ENCODE measurements at regions of chr17 and their contacts with region 1.

Region 1: GRCh38 chr17:42517516-42517915 is 18.5 kb upstream of the NAGLU start:
- DNase-seq: peak; percentile 92
- ATAC-seq: peak; percentile 64

Region 2: GRCh38 chr17:42322382-42323267 is 194.9 kb before region 1 on chr17:
- intact Hi-C with region 1: loop called (anchors 5 kb)
- DNase-seq: peak; percentile 93
- ATAC-seq: peak; percentile 84

Region 3: GRCh38 chr17:42405963-42406495 is 111.5 kb before region 1 on chr17:
- intact Hi-C with region 1: loop called (anchors 5 kb)
- DNase-seq: peak; percentile 94
- ATAC-seq: peak; percentile 77

Region 4: GRCh38 chr17:42422958-42423712 is 94.4 kb before region 1 on chr17 and contains the start of gene CAVIN1:
- intact Hi-C with region 1: loop called (anchors 5 kb)
- DNase-seq: peak; percentile 99
- ATAC-seq: peak; percentile 92
- total RNA-seq, gene CAVIN1: 240 TPM

Region 5: DNA sequence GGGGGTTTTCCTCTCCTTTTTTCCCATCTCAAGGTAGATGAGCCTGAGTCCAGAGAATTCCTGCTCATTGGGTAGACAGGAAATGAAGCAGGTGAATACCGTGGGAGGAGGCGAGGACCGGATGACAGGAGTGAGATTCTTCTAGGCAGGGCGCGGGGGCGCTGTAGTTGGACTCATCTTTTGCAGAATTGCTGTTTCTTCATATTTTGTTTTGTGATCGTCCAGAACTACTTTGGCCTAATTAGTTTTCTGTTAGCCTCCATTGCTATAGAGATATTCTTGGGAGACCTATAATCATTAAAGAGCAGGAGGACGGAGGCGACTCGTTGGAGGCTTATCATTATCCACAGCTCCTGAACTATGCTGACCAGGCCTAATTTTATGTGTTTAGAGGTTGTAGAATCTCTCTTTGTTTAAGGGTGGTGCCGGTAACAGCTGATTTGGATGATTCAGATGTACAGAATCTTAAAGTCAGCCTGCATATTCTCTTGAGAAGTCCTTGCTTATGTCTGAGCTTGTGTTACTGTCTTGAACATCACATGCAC is 58.2 kb before region 1 on chr17:
- intact Hi-C with region 1: loop called (anchors 5 kb)
- DNase-seq: peak; percentile 77
- ATAC-seq: peak; percentile 40

Region 6: GRCh38 chr17:42554250-42555121 is 37.0 kb after region 1 on chr17:
- intact Hi-C with region 1: no loop called
- DNase-seq: peak; percentile 93
- ATAC-seq: peak; percentile 94

Region 7: DNA sequence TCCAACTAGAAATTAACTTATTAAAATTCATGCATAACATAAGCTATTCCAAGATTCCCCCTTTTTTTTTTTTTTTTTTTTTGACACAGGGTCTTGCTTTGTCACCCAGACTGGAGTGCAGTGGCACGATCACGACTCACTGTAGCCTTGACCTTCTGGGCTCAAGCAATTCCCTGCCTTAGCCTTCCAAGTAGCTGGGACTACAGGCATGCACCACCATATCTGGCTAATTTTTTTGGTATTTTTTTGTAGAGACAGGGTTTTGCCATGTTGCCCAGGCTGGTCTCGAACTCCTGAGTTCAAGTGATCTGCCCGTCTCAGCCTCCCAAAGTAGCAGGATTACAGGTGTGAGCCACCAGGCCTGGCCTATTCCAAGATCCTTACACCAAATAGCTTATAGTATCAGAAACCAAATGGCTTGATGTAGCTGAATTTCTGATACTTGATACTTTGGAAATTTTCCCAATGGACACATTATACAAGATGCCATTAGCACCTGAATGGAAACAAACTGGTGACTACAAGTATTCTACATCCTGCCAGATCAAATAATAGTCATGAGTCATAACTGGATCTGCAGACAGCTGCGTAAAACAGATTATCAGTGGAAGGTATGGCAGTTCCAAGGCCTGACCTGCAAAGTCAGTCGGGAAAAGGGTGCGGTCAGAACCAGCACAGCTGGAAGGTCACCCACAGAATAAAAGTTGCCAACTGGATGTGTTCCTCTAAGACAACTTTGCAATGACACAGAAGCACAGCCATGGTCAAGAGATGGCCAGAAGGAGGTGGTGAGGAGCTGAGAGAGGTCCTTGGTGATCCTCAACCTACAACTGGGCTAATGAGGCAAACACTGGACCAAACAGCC is 106.4 kb after region 1 on chr17:
- intact Hi-C with region 1: no loop called
- DNase-seq: no peak
- ATAC-seq: no peak

Measured in Right ventricle myocardium inferior (tissue), 1 donor.